Endothelial cell of umbilical vein (primary cell): ENCODE measurements at regions of chr7 and their contacts with region 1.

Region 1: DNA sequence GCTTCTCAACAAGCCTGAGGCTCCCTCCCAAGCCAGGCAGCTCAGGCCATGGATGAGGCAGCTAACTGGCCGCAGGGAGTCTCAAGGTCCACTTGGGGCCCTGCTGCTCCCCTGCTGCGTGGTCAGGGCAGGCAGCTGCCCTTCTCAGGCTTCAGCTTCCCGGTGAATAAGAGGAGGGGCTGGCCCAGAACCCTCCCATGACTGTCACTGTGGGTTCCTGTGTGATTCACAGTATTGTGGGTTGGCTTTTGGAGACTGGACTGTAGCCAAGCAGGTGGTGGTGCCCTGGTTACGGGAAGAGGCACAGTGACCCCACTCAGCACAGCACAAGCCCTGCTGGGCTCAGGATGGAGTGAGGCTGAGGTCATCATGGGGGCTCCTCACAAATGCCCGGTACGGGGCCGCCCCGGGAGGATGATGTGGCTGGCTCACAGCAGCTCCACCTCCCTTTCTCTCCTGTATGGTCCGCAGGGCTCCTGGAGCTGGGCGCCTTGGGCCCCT is 189.8 kb downstream of the HECW1 start:
- DNase-seq: no peak
- H3K4me3 ChIP-seq: no peak overlapping the region
- H3K27ac ChIP-seq: no peak overlapping the region
- H3K4me1 ChIP-seq: no peaks in the 10 kb centered on the region
- H3K27me3 ChIP-seq: peaks cover 0 to 2% of the 10 kb centered on the region in 2 experiments
- CTCF ChIP-seq: no peak
- POLR2A ChIP-seq: no peak

Region 2: GRCh38 chr7:42993038-42993437 is 309.2 kb before region 1 on chr7:
- CTCF ChIA-PET with region 1: no interaction called
- POLR2A ChIA-PET with region 1: no interaction called
- dilution Hi-C with region 1: loop called (anchors 25 kb)
- intact Hi-C with region 1: no loop called
- DNase-seq: no peak
- H3K4me3 ChIP-seq: no peak overlapping the region
- H3K27ac ChIP-seq: no peak overlapping the region
- H3K4me1 ChIP-seq: no peaks in the 10 kb centered on the region
- H3K27me3 ChIP-seq: peaks cover 4 to 7% of the 10 kb centered on the region in 2 experiments
- CTCF ChIP-seq: no peak
- POLR2A ChIP-seq: no peak